ENCODE measurements at regions of chr10 and their contacts with region 1.

Region 1: DNA sequence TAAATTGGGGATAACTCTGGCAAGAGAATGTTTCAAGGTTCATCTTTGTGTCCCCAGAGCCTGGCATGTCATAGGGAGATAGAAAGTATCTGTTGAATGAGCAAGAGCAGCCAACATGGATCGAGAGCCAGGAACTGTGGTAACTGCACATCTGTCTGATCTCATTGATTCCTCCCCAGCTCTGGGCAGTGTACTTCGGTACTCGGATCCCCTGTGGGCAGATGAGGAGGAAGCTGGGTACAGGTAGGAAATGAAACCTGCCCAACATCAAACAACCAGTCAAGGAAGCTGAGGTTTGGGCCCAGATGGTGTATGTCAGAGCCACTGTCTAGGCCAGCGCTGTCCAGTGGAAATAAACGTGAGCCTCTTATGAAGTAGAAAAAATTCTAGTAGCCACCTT is 76.4 kb downstream of the GRK5 start:
- DNase-seq: no peak
- H3K4me3 Mint-ChIP-seq: no peak overlapping the region
- H3K27ac Mint-ChIP-seq: peak overlapping the region; percentile 76
- H3K4me1 Mint-ChIP-seq: peaks cover 65% of the 10 kb centered on the region
- H3K27me3 Mint-ChIP-seq: no peaks in the 10 kb centered on the region

Region 2: DNA sequence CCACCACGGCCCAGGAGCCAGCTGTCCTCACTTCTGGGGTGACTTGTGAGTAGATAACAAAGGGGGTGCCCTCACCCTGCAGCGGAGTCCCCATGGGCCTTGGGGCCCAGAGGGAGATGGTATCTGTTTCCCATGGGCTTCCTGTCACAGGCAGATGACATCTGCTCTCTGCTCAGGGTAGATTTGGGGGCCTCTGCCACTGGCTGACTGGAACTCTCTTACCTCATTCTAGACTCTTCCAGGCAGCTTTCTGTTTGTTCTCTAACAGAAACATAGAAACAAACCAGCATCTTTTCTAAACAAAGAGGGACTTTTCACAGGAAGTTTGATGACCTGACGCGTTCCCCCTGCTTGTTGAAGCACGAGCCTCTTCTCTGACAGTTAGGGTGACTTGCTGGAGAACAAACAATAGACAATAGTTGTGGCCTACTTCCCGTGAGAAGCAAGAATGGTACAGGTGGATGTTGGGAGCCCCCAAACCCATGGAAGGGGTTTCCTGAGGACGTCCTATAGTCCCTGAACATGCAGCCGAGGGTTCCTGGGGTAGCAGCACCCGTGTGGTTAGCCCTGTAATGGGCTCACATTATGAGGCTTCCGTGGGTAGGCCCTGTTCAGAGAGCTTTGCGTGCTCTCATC is 14.8 kb before region 1 on chr10:
- intact Hi-C with region 1: loop called (anchors 1 kb)
- DNase-seq: peak; percentile 77
- H3K4me3 Mint-ChIP-seq: peak overlapping the region; percentile 53
- H3K27ac Mint-ChIP-seq: peak overlapping the region; percentile 99
- H3K4me1 Mint-ChIP-seq: peaks cover 47% of the 10 kb centered on the region
- H3K27me3 Mint-ChIP-seq: no peaks in the 10 kb centered on the region

Region 3: DNA sequence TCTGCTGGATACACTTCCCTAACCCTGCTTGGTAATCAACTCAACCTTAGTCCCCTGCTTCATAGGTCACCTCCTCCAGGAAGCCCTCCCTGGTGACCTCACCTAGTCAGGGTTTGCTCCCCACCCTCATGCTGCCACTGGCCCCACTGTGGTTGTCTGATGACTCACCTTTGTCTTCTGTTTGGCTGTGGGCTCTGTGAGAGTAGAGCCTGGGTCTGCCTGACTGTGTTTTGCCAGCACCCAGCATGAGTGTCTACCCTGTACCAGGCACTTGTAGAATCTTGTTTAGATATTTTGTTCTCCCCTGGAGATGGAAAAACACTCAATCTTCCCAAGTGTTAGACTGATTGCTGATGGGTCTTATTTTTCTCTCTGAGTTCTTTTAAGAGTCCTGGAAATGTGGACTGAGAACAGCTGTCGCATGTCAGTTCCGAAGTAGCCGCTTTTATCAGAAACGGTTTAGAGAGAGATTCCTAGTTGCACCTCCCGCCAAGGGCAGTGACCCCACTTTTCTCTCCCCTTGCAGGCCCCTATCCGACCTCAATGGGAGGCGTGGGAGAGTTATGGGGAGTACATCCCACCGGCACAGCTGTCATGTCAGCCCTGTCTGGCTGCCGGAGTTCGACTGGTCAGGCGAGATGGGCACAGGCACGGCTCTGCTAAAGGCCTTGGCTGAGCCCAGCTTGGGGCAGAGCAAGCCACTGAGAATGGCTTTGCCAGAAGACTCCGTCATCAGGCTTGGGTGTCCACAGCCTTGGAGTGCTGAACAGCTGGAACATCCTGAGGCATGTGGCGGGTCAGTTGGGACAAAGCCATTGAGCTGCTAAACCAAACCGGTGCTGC is 57.9 kb after region 1 on chr10:
- intact Hi-C with region 1: no loop called
- DNase-seq: no peak
- H3K4me3 Mint-ChIP-seq: no peak overlapping the region
- H3K27ac Mint-ChIP-seq: peak overlapping the region; percentile 10
- H3K4me1 Mint-ChIP-seq: peaks cover 20% of the 10 kb centered on the region
- H3K27me3 Mint-ChIP-seq: no peaks in the 10 kb centered on the region

Measured in activated T-helper 2 cell treated with anti-CD3 and anti-CD28 coated beads, Interferon-gamma antibody, Interleukin-2, Interleukin-4, amounts not matched to agents 10 μg/mL and 5 μg/mL and 100 μg/mL, durations not matched to agents 14 hours and 24 hours and 36 hours (primary cell).